GM13977 (cell line): ENCODE measurements at regions of chr12 and their contacts with region 1.

Region 1: DNA sequence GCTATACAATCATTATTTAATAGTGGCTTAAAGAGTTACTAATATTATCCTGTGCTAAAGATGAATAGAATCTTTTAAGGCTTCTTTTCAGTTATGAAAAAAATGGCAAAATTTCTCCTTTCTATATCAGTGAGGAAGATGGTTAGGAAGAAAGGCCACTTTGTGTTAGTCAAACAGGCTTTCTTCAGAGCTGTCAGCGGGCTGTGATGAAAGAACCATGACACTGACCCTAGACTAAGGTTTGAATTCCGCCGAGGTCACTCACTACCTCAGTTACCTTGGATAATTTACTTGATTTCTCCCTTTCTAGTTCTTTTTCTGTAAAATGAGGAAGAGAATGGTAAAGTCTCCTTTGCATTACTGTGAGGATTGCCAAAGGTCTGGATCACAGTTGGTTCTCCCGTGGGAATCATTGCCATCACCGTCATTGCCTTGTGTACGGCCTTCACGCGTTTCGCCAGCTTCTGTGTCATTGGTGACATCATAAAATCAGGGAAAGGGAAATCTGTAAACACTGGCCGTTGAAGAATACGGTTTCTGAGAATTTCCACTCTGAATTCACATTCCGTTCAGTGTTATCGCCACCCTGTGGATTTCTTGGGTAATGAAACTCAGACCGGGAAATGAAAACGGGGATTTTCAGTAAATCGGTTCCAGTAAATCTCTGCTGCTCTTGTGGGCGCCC is 26.7 kb upstream of the YBX3 start:
- DNase-seq: peak; percentile 61
- CTCF ChIP-seq: peak; percentile 86

Region 2: DNA sequence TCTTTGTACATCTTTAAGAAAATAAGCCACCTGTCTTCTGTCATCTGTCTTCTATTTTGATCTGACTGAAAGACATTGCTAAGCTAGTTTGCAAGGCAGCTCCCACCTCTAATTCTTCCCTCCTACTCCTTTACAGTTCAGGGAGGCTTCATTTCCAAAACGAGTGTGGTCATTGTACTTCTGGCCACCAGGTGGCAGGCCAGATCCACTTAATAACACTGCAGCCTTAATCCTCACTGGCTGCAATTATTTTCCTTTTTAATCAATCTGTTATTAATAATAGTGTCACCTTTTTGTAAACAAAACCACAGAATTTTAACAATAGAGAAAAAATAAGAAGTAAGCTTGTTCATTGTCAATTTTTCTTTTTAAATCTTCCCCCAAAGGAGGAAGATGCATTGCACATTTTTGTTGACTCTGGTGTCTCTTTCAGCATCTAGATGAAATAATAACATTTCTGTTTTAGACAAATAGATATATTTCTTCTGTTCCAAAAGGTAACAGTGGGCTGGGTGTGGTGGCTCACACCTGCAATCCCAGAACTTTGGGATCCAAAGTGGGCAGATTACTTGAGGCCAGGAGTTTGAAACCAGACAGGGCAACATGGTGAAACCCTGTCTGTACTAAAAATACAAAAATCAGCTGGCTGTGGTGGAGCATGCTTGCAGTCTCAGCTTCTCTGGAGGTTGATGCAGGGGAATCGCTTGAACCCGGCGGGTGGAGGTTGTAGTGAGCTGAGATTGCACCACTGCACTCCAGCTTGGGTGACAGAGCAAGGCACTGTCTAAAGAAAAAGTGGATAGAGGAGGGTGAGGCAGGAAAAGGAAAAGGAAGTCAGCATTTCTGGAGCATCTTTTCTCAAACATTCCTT is 513.8 kb before region 1 on chr12:
- in situ Hi-C with region 1: loop called (anchors 10 kb)
- DNase-seq: peak; percentile 59
- CTCF ChIP-seq: peak; percentile 75